Activated CD4-positive, alpha-beta T cell treated with anti-CD3 and anti-CD28 coated beads for 36 hours (primary cell): ENCODE measurements at regions of chr20 and their contacts with region 1.

Region 1: DNA sequence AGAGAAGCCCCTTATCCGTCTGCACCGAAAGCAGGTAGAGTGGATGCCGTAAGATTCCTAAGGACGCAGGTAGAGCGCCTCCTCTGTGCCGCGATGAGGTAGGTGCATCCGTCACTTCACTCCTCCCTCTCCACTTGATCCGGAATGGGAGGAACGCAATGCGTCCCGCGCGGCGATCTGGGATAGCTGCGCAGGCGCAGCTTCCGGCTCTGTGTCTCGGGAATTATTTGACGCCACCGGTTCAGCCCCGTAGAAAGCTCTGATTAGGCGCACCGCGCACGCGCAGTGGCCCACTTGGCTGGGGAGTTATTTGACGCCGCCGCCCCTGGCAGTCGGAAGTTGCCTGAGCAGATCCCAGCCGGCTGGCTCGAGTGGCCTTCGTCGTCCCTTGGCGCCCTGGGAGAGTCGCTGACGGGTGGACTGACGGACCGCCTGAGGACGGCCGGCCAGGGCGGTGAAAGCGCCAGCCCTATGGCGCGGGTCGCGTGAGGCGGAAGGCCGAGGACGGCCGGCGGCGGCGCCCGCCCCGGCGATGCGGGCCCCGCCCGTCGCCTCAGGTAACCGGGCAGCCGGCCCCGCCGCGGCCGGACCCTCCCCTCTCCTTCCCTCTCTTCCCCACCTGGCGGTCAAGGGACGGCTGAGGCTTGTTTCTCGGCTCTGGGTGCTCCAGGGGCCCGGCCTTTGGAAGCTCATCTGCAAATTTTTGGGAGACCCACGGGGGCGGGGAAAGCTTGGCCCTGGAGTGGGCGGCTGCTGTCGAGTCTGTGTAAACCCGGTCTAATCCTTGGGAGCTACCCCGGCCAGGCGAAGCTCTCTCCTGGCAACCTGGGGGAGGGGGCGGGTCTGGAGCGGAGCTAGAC is at the start of gene RALGAPB:
- DNase-seq: peak; percentile 99
- ATAC-seq: peak; percentile 96
- H3K4me3 Mint-ChIP-seq: peak within 1 kb of the TSS; percentile 85
- H3K27ac Mint-ChIP-seq: peak within 1 kb of the TSS; percentile 79
- H3K4me1 Mint-ChIP-seq: peaks cover 38% of the 10 kb centered on the region
- H3K27me3 Mint-ChIP-seq: no peaks in the 10 kb centered on the region
- total RNA-seq, gene RALGAPB: 23.5 to 27.1 TPM

Region 2: GRCh38 chr20:36984257-36984638 is 1488.5 kb before region 1 on chr20:
- CTCF ChIA-PET with region 1: no interaction called
- POLR2A ChIA-PET with region 1: no interaction called
- intact Hi-C with region 1: no loop called
- DNase-seq: no peak
- ATAC-seq: no peak
- H3K4me3 Mint-ChIP-seq: no peak overlapping the region
- H3K27ac Mint-ChIP-seq: no peak overlapping the region
- H3K4me1 Mint-ChIP-seq: peaks cover 18% of the 10 kb centered on the region
- H3K27me3 Mint-ChIP-seq: no peaks in the 10 kb centered on the region

Region 3: GRCh38 chr20:38434743-38435554 is 37.8 kb before region 1 on chr20 and contains the start of gene SNHG17:
- CTCF ChIA-PET with region 1: interaction called, 21 read pairs
- POLR2A ChIA-PET with region 1: interaction called, 35 read pairs
- intact Hi-C with region 1: loop called (anchors 1 kb)
- DNase-seq: peak; percentile 94
- ATAC-seq: peak; percentile 84
- H3K4me3 Mint-ChIP-seq: peak within 1 kb of the TSS; percentile 97
- H3K27ac Mint-ChIP-seq: peak within 1 kb of the TSS; percentile 98
- H3K4me1 Mint-ChIP-seq: peaks cover 39% of the 10 kb centered on the region
- H3K27me3 Mint-ChIP-seq: peaks cover 4% of the 10 kb centered on the region
- total RNA-seq, gene SNHG17: 70.7 to 72.4 TPM

Region 4: DNA sequence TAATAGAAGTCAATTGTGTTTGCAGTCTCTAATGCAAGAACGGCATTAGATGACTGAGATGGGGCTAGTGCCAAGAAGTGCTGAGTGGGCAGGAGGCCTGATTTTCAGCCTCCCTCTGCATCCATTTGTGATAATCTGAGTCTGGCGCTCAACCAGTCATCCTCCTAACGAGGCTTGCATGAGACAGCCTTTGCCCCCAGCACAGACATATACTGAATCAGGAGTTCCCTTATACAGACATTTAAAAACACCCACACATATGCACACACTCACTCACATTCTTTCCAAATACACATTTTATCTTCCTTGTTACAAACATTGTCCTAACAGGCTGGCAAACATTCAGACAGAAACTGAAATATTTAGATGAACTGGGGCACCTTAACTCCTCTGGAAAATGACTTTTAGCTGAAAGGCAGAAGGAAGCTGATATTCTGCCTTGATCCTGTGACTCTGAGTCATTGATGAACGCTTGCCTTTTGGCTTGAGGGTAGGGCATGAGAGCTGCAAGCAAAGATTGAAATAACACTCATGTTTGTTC is 1051.7 kb after region 1 on chr20:
- CTCF ChIA-PET with region 1: no interaction called
- POLR2A ChIA-PET with region 1: no interaction called
- intact Hi-C with region 1: no loop called
- DNase-seq: no peak
- ATAC-seq: no peak
- H3K4me3 Mint-ChIP-seq: no peak overlapping the region
- H3K27ac Mint-ChIP-seq: no peak overlapping the region
- H3K4me1 Mint-ChIP-seq: no peaks in the 10 kb centered on the region
- H3K27me3 Mint-ChIP-seq: peaks cover 2% of the 10 kb centered on the region

Region 5: GRCh38 chr20:40134176-40134575 is 1661.4 kb after region 1 on chr20:
- CTCF ChIA-PET with region 1: no interaction called
- POLR2A ChIA-PET with region 1: no interaction called
- intact Hi-C with region 1: no loop called
- DNase-seq: no peak
- ATAC-seq: no peak
- H3K4me3 Mint-ChIP-seq: no peak overlapping the region
- H3K27ac Mint-ChIP-seq: no peak overlapping the region
- H3K4me1 Mint-ChIP-seq: no peaks in the 10 kb centered on the region
- H3K27me3 Mint-ChIP-seq: peaks cover 2% of the 10 kb centered on the region